PC-9 (cell line): ENCODE measurements at regions of chr1 and their contacts with region 1.

Region 1: GRCh38 chr1:37692078-37692833 is at the start of gene CDCA8:
- DNase-seq: peak; percentile 94 to 99
- H3K4me3 ChIP-seq: peak within 1 kb of the TSS; percentile 89
- H3K27ac ChIP-seq: no peak within 1 kb of the TSS
- H3K4me1 ChIP-seq: peaks cover 21% of the 10 kb centered on the region
- H3K27me3 ChIP-seq: no peaks in the 10 kb centered on the region
- CTCF ChIP-seq: peak; percentile 73
- total RNA-seq, gene CDCA8: 42.8 and 57.9 TPM in 2 replicates

Region 2: GRCh38 chr1:37474046-37474759 is 218.1 kb before region 1 on chr1 and contains the start of gene ZC3H12A:
- CTCF ChIA-PET with region 1: no interaction called
- POLR2A ChIA-PET with region 1: no interaction called
- intact Hi-C with region 1: loop called (anchors 1 kb)
- DNase-seq: peak; percentile 76 to 96
- H3K4me3 ChIP-seq: peak within 1 kb of the TSS; percentile 94
- H3K27ac ChIP-seq: peak within 1 kb of the TSS; percentile 96
- H3K4me1 ChIP-seq: peaks cover 57% of the 10 kb centered on the region
- H3K27me3 ChIP-seq: no peaks in the 10 kb centered on the region
- CTCF ChIP-seq: no peak
- total RNA-seq, gene ZC3H12A: 18.7 and 18.9 TPM in 2 replicates

Region 3: GRCh38 chr1:37595440-37596319 is 96.6 kb before region 1 on chr1 and contains the start of gene GNL2:
- CTCF ChIA-PET with region 1: no interaction called
- POLR2A ChIA-PET with region 1: interaction called, 4 read pairs
- intact Hi-C with region 1: loop called (anchors 2 kb)
- DNase-seq: peak; percentile 85 to 98
- H3K4me3 ChIP-seq: peak within 1 kb of the TSS; percentile 85
- H3K27ac ChIP-seq: peak within 1 kb of the TSS; percentile 3; the same call in 1 of the 2 replicates
- H3K4me1 ChIP-seq: peaks cover 14% of the 10 kb centered on the region
- H3K27me3 ChIP-seq: no peaks in the 10 kb centered on the region
- CTCF ChIP-seq: no peak
- total RNA-seq, gene GNL2: 51.3 and 51.9 TPM in 2 replicates

Region 4: DNA sequence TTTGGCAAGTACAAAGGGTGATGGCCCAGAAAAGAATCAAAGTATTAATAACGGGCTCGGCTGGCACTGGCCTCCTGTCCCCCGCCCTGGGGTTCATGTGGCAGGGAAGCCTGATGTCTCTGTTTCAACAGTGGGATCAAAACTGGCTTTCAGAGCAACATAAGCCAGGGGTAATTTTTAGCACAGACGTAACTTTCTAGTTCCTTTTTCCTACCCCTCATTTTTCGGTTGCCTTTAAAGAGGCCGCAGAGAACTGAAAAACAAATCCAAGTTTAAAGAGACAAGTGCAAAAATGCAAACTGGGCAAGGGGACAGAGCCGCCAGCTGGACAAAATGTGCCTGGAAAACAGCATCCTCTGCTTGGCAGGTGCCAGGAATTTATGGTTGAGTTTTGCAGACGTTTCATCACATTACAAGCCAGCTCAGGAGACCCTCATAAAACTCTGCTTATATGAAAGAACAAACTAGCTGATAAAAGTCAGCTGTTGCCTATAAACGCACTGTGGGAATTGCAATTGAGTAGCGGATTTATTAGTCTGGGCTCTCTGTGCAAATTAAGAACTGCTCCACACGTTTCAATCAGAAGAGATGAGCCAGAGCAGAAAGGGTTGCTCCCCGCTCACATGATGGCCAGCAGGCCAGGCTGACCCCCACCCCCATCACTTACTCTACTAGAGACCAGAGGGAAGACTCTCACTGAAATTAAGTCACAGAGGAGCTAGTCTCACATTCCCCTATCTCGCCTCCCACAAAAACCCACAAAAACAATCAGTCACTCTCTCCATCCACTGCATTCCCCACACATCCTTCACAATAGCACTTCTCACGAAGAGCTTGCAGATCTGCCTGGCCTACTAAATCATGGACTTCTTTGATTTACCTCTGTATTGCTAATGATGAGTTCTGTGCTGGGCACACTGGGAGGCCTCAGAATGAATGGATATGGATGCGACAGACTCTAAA is 15.7 kb before region 1 on chr1:
- CTCF ChIA-PET with region 1: no interaction called
- POLR2A ChIA-PET with region 1: no interaction called
- intact Hi-C with region 1: no loop called
- DNase-seq: no peak
- H3K4me3 ChIP-seq: no peak overlapping the region
- H3K27ac ChIP-seq: no peak overlapping the region
- H3K4me1 ChIP-seq: no peaks in the 10 kb centered on the region
- H3K27me3 ChIP-seq: peaks cover 18% of the 10 kb centered on the region
- CTCF ChIP-seq: no peak

Region 5: DNA sequence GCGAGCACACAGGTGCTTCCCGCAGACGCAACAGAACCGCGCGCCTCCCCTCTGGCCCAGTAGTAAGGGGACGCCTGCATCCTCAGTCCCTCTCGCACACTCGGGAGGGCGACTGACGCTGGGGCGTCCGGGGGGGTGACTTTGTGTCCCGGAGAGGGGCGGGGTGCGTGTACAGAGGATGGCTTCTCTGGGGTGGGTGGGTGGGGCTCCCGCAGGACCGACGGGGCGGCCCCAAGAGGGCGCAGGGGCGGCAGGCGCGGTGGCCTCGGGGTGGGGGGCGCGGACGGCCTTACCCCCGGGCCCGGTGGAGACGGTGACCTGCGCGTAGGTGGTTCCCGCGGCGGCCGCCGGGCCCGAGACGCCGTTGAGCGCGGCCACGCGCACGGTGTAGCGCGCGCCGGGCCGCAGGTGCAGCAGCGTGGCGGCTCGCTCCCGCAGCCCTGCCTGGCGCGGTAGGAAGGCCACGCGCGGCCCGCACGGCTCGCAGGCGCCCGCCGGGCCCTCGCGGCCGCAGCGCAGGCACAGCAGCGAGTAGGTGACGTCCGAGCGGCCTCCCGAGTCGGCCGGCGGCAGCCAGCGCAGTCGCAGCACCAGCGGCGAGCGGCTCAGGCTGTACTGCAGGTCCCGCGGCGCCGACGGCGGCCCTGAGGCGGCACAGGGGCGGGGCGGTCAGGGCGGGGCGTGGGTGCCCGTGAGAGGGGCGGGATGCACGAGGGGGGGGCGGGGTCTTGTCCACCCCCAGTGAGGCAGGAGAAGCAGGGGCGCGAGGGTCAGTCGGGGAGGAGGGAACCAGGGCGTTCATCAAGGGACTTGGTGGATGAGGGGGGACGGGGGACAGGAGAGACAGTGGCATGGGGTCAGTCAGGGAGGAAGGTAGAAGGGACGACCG is 60.6 kb after region 1 on chr1:
- CTCF ChIA-PET with region 1: no interaction called
- POLR2A ChIA-PET with region 1: no interaction called
- intact Hi-C with region 1: loop called (anchors 10 kb)
- DNase-seq: peak; percentile 49 to 70
- H3K4me3 ChIP-seq: peak overlapping the region; percentile 55
- H3K27ac ChIP-seq: no peak overlapping the region
- H3K4me1 ChIP-seq: no peaks in the 10 kb centered on the region
- H3K27me3 ChIP-seq: peaks cover 6% of the 10 kb centered on the region
- CTCF ChIP-seq: no peak

Region 6: DNA sequence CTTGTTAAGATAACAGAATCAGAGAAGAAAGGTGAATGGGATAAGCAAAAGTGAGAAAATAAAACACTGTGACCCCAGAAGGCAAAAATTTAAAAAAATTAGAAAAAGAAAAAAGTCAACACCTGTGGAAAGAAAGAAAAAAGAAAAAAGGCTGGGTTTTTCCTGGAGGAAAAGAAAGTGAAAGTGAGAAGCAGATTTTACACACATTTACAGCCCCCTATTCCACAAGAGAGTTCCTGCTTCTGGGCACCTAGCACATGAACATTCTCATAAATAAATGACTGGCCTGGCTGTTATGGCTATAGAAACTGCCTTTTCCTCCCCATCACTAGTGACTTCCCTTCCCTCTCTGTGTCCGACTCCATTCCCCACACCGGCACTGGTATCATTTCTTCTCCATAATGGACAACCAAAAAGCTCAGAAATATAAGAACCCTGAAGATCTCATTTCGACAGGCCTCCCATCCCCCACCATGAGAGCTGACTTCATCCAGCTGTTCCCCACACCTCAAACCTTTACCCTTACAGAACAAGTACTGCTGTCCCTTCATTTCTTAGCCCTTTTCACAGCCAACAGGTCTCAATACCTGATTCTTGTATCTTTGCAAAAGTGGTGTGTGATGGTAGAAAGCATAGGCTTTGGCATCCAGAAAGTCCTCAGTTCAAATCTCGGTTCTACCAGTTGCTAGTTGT is 154.5 kb after region 1 on chr1:
- CTCF ChIA-PET with region 1: no interaction called
- POLR2A ChIA-PET with region 1: no interaction called
- intact Hi-C with region 1: no loop called
- DNase-seq: no peak
- H3K4me3 ChIP-seq: no peak overlapping the region
- H3K27ac ChIP-seq: no peak overlapping the region
- H3K4me1 ChIP-seq: peaks cover 49% of the 10 kb centered on the region
- H3K27me3 ChIP-seq: no peaks in the 10 kb centered on the region
- CTCF ChIP-seq: no peak

Region 7: DNA sequence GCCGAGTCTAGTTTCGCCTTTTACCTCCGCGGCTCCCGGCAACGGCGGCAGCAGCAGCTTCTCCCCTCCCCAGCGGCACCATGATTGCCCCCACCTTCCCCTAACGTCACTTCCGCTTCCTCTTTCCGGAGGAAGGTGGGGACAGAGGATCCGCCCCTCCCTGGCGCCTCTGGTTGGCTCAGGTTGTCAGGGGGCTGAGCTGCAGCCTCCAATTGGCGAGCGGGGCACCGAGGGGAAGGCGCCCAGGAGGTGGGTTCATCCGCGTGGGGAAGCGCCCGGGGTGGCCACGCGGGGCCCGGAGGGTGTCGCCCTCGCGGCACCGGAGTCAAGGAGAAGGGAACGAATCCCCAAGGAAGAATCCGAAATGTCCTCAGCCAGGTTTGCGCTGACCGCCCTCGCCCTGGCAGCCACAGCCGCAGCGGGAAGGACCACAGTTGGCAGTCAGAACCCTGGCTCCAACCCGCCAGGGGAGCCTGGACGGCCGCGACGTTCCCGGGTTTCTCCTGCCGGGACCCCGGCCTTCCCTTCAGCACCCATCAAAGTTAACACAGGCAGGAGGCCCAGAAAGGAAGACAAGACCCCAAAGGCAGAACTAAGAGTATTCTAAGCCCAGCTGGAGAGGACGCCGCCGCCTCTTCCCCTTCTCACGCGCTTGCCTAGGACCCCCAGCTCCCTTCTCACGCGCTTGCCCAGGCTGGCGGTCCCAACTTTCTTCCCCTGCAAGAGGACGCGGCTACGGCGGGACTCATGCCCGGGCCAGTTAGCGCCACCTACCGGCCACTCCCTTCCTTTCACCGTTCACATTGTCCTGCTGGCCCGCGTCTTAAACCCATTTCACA is 167.5 kb after region 1 on chr1 and contains the start of gene MTF1:
- CTCF ChIA-PET with region 1: interaction called, 8 read pairs
- POLR2A ChIA-PET with region 1: no interaction called
- intact Hi-C with region 1: loop called (anchors 1 kb)
- DNase-seq: peak; percentile 91 to 97
- H3K4me3 ChIP-seq: peak within 1 kb of the TSS; percentile 76
- H3K27ac ChIP-seq: peak within 1 kb of the TSS; percentile 91
- H3K4me1 ChIP-seq: peaks cover 31% of the 10 kb centered on the region
- H3K27me3 ChIP-seq: no peaks in the 10 kb centered on the region
- CTCF ChIP-seq: peak; percentile 92
- total RNA-seq, gene MTF1: 22.1 and 22.5 TPM in 2 replicates

Region 8: DNA sequence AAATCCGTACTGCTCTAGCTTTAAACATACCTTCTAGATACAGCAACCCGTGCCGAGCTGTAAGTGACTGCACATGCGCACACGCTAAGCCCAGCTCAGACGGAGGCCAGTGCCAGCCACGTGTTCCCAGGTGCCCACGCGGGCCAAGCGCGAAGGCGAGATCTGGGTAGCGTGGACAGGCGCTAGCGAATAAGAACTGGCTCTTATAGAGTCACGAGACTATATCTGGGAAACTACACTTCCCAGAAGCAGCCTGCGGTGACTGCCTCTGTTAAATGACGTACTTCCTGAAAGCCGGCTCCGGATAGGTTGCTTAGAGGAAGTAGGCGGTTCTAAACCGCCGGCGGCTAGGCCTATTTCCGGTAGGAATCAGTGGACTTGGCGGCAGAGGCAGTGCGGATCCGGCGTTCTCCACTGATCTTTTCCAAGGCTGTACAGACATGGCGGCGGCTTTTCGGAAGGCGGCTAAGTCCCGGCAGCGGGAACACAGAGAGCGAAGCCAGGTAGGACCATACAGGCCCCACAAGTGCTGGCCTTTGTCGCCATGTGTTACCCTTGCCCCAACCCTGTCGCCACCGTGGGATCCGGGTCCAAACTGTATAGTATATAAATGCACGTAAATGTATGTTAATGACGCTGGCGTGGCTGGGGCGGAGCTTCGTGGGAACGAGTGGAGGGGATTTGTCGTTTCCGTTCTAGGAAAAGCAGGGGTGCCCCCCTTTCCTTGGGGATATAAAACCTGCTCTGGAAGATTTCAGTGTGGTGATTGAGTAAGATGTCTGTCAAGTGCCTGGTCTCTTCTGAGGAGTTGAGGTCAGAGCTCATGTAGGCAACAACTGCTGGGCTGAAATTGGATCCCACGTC is 320.3 kb after region 1 on chr1 and contains the start of gene UTP11:
- CTCF ChIA-PET with region 1: no interaction called
- POLR2A ChIA-PET with region 1: no interaction called
- intact Hi-C with region 1: loop called (anchors 2 kb)
- DNase-seq: peak; percentile 95 to 98
- H3K4me3 ChIP-seq: peak within 1 kb of the TSS; percentile 69
- H3K27ac ChIP-seq: peak within 1 kb of the TSS; percentile 73
- H3K4me1 ChIP-seq: peaks cover 15% of the 10 kb centered on the region
- H3K27me3 ChIP-seq: no peaks in the 10 kb centered on the region
- CTCF ChIP-seq: no peak
- total RNA-seq, gene UTP11: 21.8 and 36.4 TPM in 2 replicates